WTC11 (cell line): ENCODE measurements at regions of chr4 and their contacts with region 1.

Region 1: GRCh38 chr4:112895811-112896608 is 153.4 kb upstream of the ANK2 start:
- DNase-seq: peak; percentile 18
- ATAC-seq: peak; percentile 86
- H3K4me3 Mint-ChIP-seq: peak overlapping the region; percentile 30; the same call in 1 of the 2 replicates
- H3K27ac Mint-ChIP-seq: peak overlapping the region; percentile 93
- H3K4me1 Mint-ChIP-seq: peaks cover 68% of the 10 kb centered on the region
- H3K27me3 Mint-ChIP-seq: no peaks in the 10 kb centered on the region
- CTCF ChIP-seq: no peak

Region 2: DNA sequence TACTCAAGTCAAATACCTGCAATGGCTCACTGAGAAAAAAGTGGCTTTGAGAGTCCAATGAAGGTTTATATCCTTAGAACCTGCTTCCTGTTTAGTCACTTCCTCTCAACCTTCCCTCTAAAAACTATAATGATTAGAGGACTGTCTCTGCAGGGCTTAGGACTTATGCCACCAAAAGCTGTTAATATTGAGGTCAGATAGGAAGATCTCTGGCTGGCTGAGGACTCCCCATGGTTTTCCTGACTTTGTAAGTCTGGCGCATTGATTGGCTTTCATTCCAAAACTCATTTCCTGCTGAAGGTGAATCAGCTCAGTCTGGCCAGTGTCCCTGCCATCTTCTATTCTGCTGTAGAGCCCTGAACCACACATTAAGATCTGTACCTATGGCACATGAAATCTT is 12.5 kb after region 1 on chr4:
- CTCF ChIA-PET with region 1: interaction called, 10 read pairs
- POLR2A ChIA-PET with region 1: no interaction called
- DNase-seq: no peak
- ATAC-seq: peak; percentile 38; the same call in 1 of the 2 replicates
- H3K4me3 Mint-ChIP-seq: no peak overlapping the region
- H3K27ac Mint-ChIP-seq: 0 out of 2 replicates have a peak overlapping the region, but pooled peaks have one; percentile 8
- H3K4me1 Mint-ChIP-seq: peaks cover 30% of the 10 kb centered on the region
- H3K27me3 Mint-ChIP-seq: no peaks in the 10 kb centered on the region
- CTCF ChIP-seq: no peak